ENCODE measurements at regions of chr16 and their contacts with region 1.

Region 1: GRCh38 chr16:1342526-1343427 is 8.9 kb downstream of the TSR3 start:
- DNase-seq: peak; percentile 92 to 98
- ATAC-seq: peak; percentile 92 to 98 (median 93)
- H3K4me3 ChIP-seq: peak overlapping the region; percentile 7
- H3K4me3 Mint-ChIP-seq: peak overlapping the region; percentile 71
- H3K27ac ChIP-seq: no peak overlapping the region
- H3K27ac Mint-ChIP-seq: peak overlapping the region; percentile 69 to 85
- H3K4me1 ChIP-seq: peaks cover 26% of the 10 kb centered on the region
- H3K4me1 Mint-ChIP-seq: peaks cover 9 to 15% of the 10 kb centered on the region in 2 donors
- H3K27me3 ChIP-seq: no peaks in the 10 kb centered on the region
- H3K27me3 Mint-ChIP-seq: no peaks in the 10 kb centered on the region
- CTCF ChIP-seq: no peak

Region 2: GRCh38 chr16:1300664-1301476 is 41.9 kb before region 1 on chr16:
- intact Hi-C with region 1: loop called (anchors 2 kb)
- DNase-seq: peak; percentile 78 to 82
- ATAC-seq: peak; percentile 77 to 84 (median 81)
- H3K4me3 ChIP-seq: no peak overlapping the region
- H3K4me3 Mint-ChIP-seq: no peak overlapping the region
- H3K27ac ChIP-seq: no peak overlapping the region
- H3K27ac Mint-ChIP-seq: no peak overlapping the region
- H3K4me1 ChIP-seq: peaks cover 27% of the 10 kb centered on the region
- H3K4me1 Mint-ChIP-seq: peaks cover 4 to 20% of the 10 kb centered on the region in 2 donors
- H3K27me3 ChIP-seq: peaks cover 3% of the 10 kb centered on the region
- H3K27me3 Mint-ChIP-seq: peaks cover 4 to 6% of the 10 kb centered on the region in 2 donors
- CTCF ChIP-seq: peak; percentile 85

Region 3: GRCh38 chr16:1331712-1332617 is 10.8 kb before region 1 on chr16:
- intact Hi-C with region 1: loop called (anchors 1 kb)
- DNase-seq: peak; percentile 67 to 74
- ATAC-seq: peak; percentile 67 to 72 (median 70)
- H3K4me3 ChIP-seq: peak overlapping the region; percentile 37
- H3K4me3 Mint-ChIP-seq: peak overlapping the region; percentile 90
- H3K27ac ChIP-seq: peak overlapping the region; percentile 86
- H3K27ac Mint-ChIP-seq: peak overlapping the region; percentile 86 to 89
- H3K4me1 ChIP-seq: peaks cover 40% of the 10 kb centered on the region
- H3K4me1 Mint-ChIP-seq: peaks cover 14 to 19% of the 10 kb centered on the region in 2 donors
- H3K27me3 ChIP-seq: peaks cover 11% of the 10 kb centered on the region
- H3K27me3 Mint-ChIP-seq: no peaks in the 10 kb centered on the region
- CTCF ChIP-seq: no peak